ENCODE measurements at regions of chr11 and their contacts with region 1.

Region 1: GRCh38 chr11:93741094-93741881 is at the starts of genes C11orf54 and TAF1D:
- DNase-seq: peak; percentile 94 to 99 (median 95)

Region 2: DNA sequence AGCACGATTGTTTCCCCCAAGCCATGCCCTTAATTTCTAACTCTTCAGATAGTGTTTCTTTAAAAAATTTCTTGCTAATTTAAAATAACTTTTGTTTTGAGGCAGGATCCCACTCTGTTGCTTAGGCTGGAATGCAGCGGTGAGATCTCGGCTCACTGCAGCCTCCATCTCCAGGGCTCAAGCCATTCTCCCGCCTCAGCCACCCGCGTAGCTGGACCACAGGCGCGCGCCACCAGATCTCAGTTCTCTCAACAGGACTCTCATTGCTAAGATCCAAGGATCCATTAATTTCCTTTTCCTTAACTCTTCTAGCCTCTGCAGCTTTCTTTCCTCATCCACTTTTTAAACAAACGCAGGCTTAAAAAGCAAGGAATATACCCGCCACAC is 42.5 kb after region 1 on chr11:
- intact Hi-C with region 1: loop called (anchors 2 kb)
- DNase-seq: no peak

Region 3: GRCh38 chr11:94000659-94001058 is 259.4 kb after region 1 on chr11:
- intact Hi-C with region 1: no loop called
- DNase-seq: no peak